ENCODE measurements at regions of chr10 and their contacts with region 1.

Region 1: DNA sequence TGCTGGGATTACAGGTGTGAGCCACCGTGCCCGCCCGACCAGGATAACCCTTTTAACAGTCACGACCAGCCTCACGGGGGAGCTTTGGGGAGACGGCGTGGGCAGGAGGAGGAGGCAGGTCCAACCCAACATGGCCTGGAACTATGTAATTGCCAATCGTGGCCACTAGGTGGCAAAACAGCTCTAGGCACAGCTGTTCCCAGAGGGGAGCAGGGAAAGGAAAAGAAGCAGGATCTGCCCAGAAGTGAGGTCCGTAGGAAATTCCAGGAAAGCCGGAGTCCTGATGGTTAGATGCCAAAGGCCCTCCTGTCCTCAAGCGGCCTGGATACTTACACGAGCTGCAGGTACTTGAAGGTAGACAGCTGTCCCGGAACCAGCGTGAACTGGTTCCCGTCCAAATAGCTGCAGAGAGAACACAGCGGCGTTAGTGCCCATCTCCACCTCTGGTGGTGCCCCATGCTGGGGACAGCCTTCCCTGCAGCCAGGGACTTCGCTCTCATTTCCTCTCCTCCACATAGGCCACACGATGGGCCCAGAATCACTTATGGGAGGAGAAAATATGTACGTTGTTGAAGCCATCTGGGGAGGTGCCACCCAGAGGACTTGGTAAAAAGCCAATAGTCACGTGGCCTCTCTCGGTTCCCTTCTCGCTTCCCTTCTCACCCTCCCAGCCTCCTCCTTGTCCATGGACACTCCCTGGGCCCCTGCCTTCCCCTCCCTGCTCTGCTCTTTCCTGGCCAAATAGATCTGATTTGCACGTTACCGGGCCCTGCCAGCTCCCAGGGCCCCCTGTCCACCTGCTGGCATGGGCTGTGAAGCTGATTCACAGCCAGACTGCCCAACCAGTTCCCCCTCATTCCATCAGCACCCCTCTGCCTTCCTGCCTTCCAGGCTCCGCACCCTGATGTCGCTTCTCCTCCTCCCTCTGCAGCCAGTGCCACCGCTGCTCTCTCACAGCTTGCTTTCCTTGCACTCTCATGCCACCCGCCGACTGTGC is 148.1 kb downstream of the SLIT1 start:
- DNase-seq: peak; percentile 71
- ATAC-seq: peak; percentile 98
- H3K4me3 ChIP-seq: peak overlapping the region; percentile 42
- H3K27ac ChIP-seq: no peak overlapping the region
- H3K4me1 ChIP-seq: peaks cover 5% of the 10 kb centered on the region; the same call in 1 of the 2 replicates
- H3K27me3 ChIP-seq: peaks cover 34% of the 10 kb centered on the region
- CTCF ChIP-seq: peak; percentile 83
- POLR2A ChIP-seq: no peak
- RAD21 ChIP-seq: peak; percentile 70

Region 2: GRCh38 chr10:96374985-96375830 is 662.5 kb before region 1 on chr10:
- CTCF ChIA-PET with region 1: no interaction called
- POLR2A ChIA-PET with region 1: no interaction called
- dilution Hi-C with region 1: no loop called
- in situ Hi-C with region 1: no loop called
- intact Hi-C with region 1: loop called (anchors 10 kb)
- DNase-seq: peak; percentile 77
- ATAC-seq: peak; percentile 99
- H3K4me3 ChIP-seq: peak overlapping the region; percentile 36
- H3K27ac ChIP-seq: no peak overlapping the region
- H3K4me1 ChIP-seq: no peaks in the 10 kb centered on the region
- H3K27me3 ChIP-seq: peaks cover 14% of the 10 kb centered on the region
- CTCF ChIP-seq: peak; percentile 99
- POLR2A ChIP-seq: no peak
- RAD21 ChIP-seq: peak; percentile 88

Region 3: GRCh38 chr10:96642973-96643372 is 394.7 kb before region 1 on chr10:
- CTCF ChIA-PET with region 1: no interaction called
- POLR2A ChIA-PET with region 1: no interaction called
- dilution Hi-C with region 1: no loop called
- in situ Hi-C with region 1: no loop called
- intact Hi-C with region 1: loop called (anchors 10 kb)
- DNase-seq: peak; percentile 31
- ATAC-seq: no peak
- H3K4me3 ChIP-seq: no peak overlapping the region
- H3K27ac ChIP-seq: no peak overlapping the region
- H3K4me1 ChIP-seq: no peaks in the 10 kb centered on the region
- H3K27me3 ChIP-seq: peaks cover 33% of the 10 kb centered on the region
- CTCF ChIP-seq: peak; percentile 66
- POLR2A ChIP-seq: no peak
- RAD21 ChIP-seq: peak; percentile 68

Region 4: GRCh38 chr10:96765406-96766240 is 272.0 kb before region 1 on chr10:
- CTCF ChIA-PET with region 1: interaction called, 4 read pairs
- POLR2A ChIA-PET with region 1: no interaction called
- dilution Hi-C with region 1: no loop called
- in situ Hi-C with region 1: no loop called
- intact Hi-C with region 1: loop called (anchors 5 kb)
- DNase-seq: peak; percentile 44
- ATAC-seq: peak; percentile 93
- H3K4me3 ChIP-seq: no peak overlapping the region
- H3K27ac ChIP-seq: no peak overlapping the region
- H3K4me1 ChIP-seq: no peaks in the 10 kb centered on the region
- H3K27me3 ChIP-seq: peaks cover 7% of the 10 kb centered on the region
- CTCF ChIP-seq: peak; percentile 81
- POLR2A ChIP-seq: no peak
- RAD21 ChIP-seq: peak; percentile 83

Region 5: GRCh38 chr10:97025613-97026242 is 11.9 kb before region 1 on chr10:
- CTCF ChIA-PET with region 1: interaction called, 13 read pairs
- POLR2A ChIA-PET with region 1: no interaction called
- dilution Hi-C with region 1: no loop called
- in situ Hi-C with region 1: no loop called
- intact Hi-C with region 1: no loop called
- DNase-seq: peak; percentile 40
- ATAC-seq: no peak
- H3K4me3 ChIP-seq: no peak overlapping the region
- H3K27ac ChIP-seq: no peak overlapping the region
- H3K4me1 ChIP-seq: peaks cover 7% of the 10 kb centered on the region
- H3K27me3 ChIP-seq: peaks cover 3% of the 10 kb centered on the region; the same call in 1 of the 2 replicates
- CTCF ChIP-seq: peak; percentile 43
- POLR2A ChIP-seq: no peak
- RAD21 ChIP-seq: no peak; the same call in 1 of the 2 replicates

Region 6: DNA sequence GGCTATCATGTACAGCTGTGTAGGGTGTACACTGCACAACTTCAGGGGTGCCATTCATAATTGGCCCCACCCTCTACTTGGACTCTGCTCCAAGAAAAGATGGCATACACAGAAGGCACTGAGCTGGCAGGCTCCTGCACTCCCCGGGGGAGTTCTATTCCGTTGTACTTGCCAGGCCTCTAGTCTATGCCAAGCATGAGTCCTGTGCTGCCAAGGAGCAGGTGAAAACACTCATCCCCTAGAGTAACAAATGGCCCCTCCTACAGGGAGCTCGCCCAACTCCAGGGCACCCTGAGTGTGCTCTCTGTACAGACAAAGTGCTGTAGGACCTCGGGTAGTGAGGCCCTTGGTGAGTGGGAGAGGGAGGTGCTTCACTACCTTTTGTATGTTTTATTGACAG is 20.9 kb after region 1 on chr10:
- CTCF ChIA-PET with region 1: interaction called, 10 read pairs
- POLR2A ChIA-PET with region 1: no interaction called
- dilution Hi-C with region 1: no loop called
- in situ Hi-C with region 1: no loop called
- intact Hi-C with region 1: no loop called
- DNase-seq: no peak
- ATAC-seq: no peak
- H3K4me3 ChIP-seq: no peak overlapping the region
- H3K27ac ChIP-seq: no peak overlapping the region
- H3K4me1 ChIP-seq: no peaks in the 10 kb centered on the region
- H3K27me3 ChIP-seq: peaks cover 47% of the 10 kb centered on the region
- CTCF ChIP-seq: no peak
- POLR2A ChIP-seq: no peak
- RAD21 ChIP-seq: no peak

Region 7: DNA sequence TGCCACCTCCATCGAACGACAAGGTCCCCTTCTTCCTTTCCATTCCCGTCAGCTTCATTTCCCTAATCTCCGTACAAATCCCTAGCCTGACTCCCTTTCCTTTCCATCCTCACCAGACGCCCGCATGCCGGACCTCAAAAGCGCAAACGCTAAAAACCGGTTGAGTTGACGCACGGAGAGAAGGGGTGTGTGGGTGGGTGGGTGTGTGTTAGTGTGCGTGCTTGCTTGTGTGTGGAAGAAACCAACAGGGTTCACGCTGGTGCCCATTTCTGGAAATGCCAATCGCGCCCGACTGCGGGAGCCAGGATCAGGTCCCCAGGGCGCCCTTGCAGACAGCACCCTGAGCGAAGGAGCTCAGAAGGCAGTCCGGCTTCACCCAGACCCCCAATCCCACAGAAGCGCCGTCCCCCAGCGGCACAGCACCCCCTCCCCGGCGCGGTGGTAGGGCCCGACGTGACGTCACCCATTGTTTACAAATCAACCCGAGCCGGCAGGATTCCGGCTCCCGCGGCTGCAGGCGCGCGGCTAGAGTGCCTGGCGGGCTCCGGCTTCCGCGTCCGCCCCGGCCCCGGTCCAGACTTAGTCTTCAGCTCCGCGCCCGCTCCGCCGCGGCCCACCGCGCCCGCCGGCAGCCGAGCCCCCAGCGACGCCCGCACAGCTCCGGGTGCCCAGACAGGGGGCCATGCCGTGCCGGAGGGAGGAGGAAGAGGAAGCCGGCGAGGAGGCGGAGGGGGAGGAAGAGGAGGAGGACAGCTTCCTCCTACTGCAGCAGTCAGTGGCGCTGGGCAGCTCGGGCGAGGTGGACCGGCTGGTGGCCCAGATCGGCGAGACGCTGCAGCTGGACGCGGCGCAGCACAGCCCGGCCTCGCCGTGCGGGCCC is 281.3 kb after region 1 on chr10 and contains the start of gene FRAT1:
- CTCF ChIA-PET with region 1: no interaction called
- POLR2A ChIA-PET with region 1: no interaction called
- dilution Hi-C with region 1: no loop called
- in situ Hi-C with region 1: no loop called
- intact Hi-C with region 1: no loop called
- DNase-seq: peak; percentile 93
- ATAC-seq: peak; percentile 92
- H3K4me3 ChIP-seq: peak within 1 kb of the TSS; percentile 92
- H3K27ac ChIP-seq: peak within 1 kb of the TSS; percentile 100
- H3K4me1 ChIP-seq: peaks cover 8% of the 10 kb centered on the region; the same call in 1 of the 2 replicates
- H3K27me3 ChIP-seq: no peaks in the 10 kb centered on the region
- CTCF ChIP-seq: no peak
- POLR2A ChIP-seq: peak; percentile 88
- RAD21 ChIP-seq: no peak
- total RNA-seq, gene FRAT1: 0.54 and 0.83 TPM in 2 replicates